Activated CD4-positive, alpha-beta memory T cell treated with anti-CD3 and anti-CD28 coated beads, Interleukin-2, amount 10 ng/mL, durations not matched to agents 7 days and 5 days (primary cell): ENCODE measurements at regions of chr2 and their contacts with region 1.

Region 1: GRCh38 chr2:48946449-48947048 is 191.0 kb upstream of the LHCGR start:
- DNase-seq: no peak
- H3K4me3 Mint-ChIP-seq: no peak overlapping the region
- H3K27ac Mint-ChIP-seq: no peak overlapping the region
- H3K4me1 Mint-ChIP-seq: no peaks in the 10 kb centered on the region
- H3K27me3 Mint-ChIP-seq: no peaks in the 10 kb centered on the region

Region 2: DNA sequence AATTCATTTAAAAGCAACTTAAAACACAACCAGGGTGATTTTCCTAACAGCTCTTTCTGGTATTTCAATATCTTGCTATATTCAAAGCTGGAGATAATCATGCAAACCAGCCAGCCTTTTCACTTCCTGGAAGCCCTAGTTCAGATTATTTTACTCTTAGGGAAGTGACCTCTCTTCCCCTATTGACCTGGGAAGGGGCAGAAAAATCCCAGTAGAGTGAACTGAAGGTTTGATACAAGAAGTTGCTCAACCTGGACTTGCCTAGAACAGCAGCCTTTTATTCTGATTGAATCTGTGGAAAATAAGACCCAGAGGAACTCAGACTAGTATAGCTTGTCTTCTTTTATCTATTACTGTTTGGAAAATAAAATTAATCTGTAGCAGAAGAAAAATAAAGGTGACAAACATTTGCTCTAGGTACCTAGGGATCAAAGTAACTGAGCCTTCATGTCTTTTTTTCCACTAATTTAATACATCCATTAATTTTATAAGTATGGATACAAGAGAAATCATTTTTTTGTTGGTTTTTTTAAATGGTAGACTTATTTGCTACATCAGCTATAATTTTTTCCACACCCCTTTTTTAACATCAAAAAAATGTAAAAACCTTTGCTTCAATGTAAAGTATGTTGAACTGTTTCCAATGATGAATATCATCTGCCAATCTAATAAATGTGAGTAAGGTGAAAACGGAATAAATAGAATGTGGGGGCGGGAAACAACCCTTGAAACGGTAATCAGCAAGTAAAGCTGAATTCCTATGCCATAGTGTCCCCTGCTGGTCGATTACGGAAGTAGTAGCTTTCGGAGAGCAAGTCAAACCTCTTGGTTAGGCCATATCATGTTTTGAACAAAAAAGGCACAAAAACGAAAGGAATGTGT is 1455.5 kb after region 1 on chr2:
- CTCF ChIA-PET with region 1: interaction called, 12 read pairs
- POLR2A ChIA-PET with region 1: no interaction called
- DNase-seq: peak; percentile 26
- H3K4me3 Mint-ChIP-seq: no peak overlapping the region
- H3K27ac Mint-ChIP-seq: no peak overlapping the region
- H3K4me1 Mint-ChIP-seq: no peaks in the 10 kb centered on the region
- H3K27me3 Mint-ChIP-seq: no peaks in the 10 kb centered on the region